ENCODE measurements at regions of chr14 and their contacts with region 1.

Region 1: GRCh38 chr14:68979021-68979782 is at the start of gene ACTN1:
- DNase-seq: peak; percentile 98
- H3K4me3 ChIP-seq: peak within 1 kb of the TSS; percentile 68 to 92 (median 79)
- H3K27ac ChIP-seq: peak within 1 kb of the TSS; percentile 87
- H3K4me1 ChIP-seq: peaks cover 52% of the 10 kb centered on the region
- H3K27me3 ChIP-seq: no peaks in the 10 kb centered on the region
- CTCF ChIP-seq: no peak
- POLR2A ChIP-seq: peak; percentile 88
- total RNA-seq, gene ACTN1: 442 and 443 TPM in 2 replicates

Region 2: GRCh38 chr14:68911594-68912227 is 67.5 kb before region 1 on chr14:
- CTCF ChIA-PET with region 1: interaction called, 7 read pairs
- POLR2A ChIA-PET with region 1: interaction called, 5 read pairs
- dilution Hi-C with region 1: no loop called
- intact Hi-C with region 1: loop called (anchors 1 kb)
- DNase-seq: peak; percentile 76
- H3K4me3 ChIP-seq: no peak overlapping the region
- H3K27ac ChIP-seq: no peak overlapping the region
- H3K4me1 ChIP-seq: no peaks in the 10 kb centered on the region
- H3K27me3 ChIP-seq: no peaks in the 10 kb centered on the region
- CTCF ChIP-seq: peak; percentile 96 to 99
- POLR2A ChIP-seq: no peak

Region 3: DNA sequence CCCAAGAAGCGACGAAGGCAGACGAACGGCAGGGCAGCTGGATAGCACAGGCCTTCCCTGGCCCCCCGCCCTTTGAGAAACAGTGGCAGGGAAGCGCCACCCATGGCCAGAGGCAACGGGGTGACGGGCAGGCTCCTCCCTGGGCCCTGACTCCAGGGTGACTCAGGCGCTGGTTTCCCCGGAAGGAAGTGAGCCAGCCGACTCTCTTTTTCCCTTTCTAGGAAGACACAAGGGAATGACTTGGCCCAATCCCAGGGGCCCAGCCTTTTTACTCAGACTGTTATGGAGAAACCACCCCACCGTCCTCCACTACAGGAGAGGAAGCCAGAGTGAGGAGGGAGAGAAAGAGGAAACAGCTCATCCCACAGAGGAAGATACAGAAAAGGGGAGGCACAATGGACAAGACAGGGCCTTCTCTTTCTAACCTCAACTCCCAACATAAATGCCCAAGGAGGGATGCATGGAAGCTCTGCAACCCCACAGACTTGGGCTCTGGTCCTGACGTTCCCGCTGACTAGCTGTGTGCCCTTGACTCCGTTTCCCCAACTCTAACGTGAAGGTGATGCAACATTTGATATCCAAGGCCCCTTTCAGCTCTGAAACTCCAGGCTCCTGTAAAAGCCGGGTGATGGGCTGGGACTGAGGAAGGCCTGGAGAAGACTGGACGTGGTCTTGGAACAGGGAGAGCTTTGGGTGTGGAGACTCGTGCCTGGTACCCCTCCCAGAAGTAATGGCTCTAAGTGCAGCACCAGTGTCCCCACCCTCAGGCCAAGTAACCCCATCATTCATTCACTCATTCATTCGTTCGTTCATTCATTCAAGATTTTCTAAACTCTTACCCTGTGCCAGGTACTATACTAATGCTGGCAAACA is 27.9 kb before region 1 on chr14:
- CTCF ChIA-PET with region 1: interaction called, 3 read pairs
- POLR2A ChIA-PET with region 1: interaction called, 3 read pairs
- dilution Hi-C with region 1: no loop called
- intact Hi-C with region 1: loop called (anchors 2 kb)
- DNase-seq: peak; percentile 74
- H3K4me3 ChIP-seq: no peak overlapping the region
- H3K27ac ChIP-seq: peak overlapping the region; percentile 77
- H3K4me1 ChIP-seq: peaks cover 78% of the 10 kb centered on the region
- H3K27me3 ChIP-seq: no peaks in the 10 kb centered on the region
- CTCF ChIP-seq: no peak
- POLR2A ChIP-seq: no peak

Region 4: GRCh38 chr14:69005432-69006147 is 26.4 kb after region 1 on chr14:
- CTCF ChIA-PET with region 1: interaction called, 3 read pairs
- POLR2A ChIA-PET with region 1: interaction called, 3 read pairs
- dilution Hi-C with region 1: no loop called
- intact Hi-C with region 1: loop called (anchors 1 kb)
- DNase-seq: peak; percentile 99
- H3K4me3 ChIP-seq: no peak overlapping the region
- H3K27ac ChIP-seq: peak overlapping the region; percentile 51
- H3K4me1 ChIP-seq: peaks cover 15% of the 10 kb centered on the region
- H3K27me3 ChIP-seq: no peaks in the 10 kb centered on the region
- CTCF ChIP-seq: no peak
- POLR2A ChIP-seq: no peak

Region 5: DNA sequence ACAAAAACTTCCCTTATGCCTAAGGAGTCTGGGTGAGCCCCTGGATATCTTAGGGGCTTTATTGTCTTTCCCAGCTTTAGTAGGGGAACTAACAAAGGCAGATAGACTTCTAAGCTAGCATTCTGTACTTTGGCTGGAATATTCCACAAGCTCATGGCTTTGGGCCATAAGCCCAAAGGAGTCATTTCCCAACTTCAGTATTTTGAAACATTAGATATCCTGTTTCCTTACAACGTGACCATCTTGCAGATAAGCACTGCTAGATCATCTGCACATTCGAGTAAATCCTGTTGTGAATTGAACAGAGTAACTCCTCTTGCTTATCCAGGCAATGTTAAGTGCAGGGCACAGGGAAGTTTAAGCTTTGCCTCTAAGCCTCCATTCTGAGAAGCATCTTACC is 70.5 kb after region 1 on chr14:
- CTCF ChIA-PET with region 1: interaction called, 10 read pairs
- POLR2A ChIA-PET with region 1: interaction called, 3 read pairs
- dilution Hi-C with region 1: no loop called
- intact Hi-C with region 1: loop called (anchors 1 kb)
- DNase-seq: peak; percentile 96
- H3K4me3 ChIP-seq: no peak overlapping the region
- H3K27ac ChIP-seq: peak overlapping the region; percentile 69
- H3K4me1 ChIP-seq: peaks cover 78% of the 10 kb centered on the region
- H3K27me3 ChIP-seq: no peaks in the 10 kb centered on the region
- CTCF ChIP-seq: no peak
- POLR2A ChIP-seq: no peak

Region 6: GRCh38 chr14:69079183-69079742 is 100.1 kb after region 1 on chr14:
- CTCF ChIA-PET with region 1: interaction called, 4 read pairs
- POLR2A ChIA-PET with region 1: interaction called, 12 read pairs
- dilution Hi-C with region 1: no loop called
- intact Hi-C with region 1: loop called (anchors 1 kb)
- DNase-seq: peak; percentile 94
- H3K4me3 ChIP-seq: peak overlapping the region in 1 of 3 experiments; percentile 33
- H3K27ac ChIP-seq: peak overlapping the region; percentile 100
- H3K4me1 ChIP-seq: peaks cover 47% of the 10 kb centered on the region
- H3K27me3 ChIP-seq: no peaks in the 10 kb centered on the region
- CTCF ChIP-seq: no peak
- POLR2A ChIP-seq: no peak